Panc1 (cell line): ENCODE measurements at regions of chr2 and their contacts with region 1.

Region 1: GRCh38 chr2:47174733-47175361 is 19.7 kb upstream of the STPG4 start:
- DNase-seq: no peak
- ATAC-seq: peak; percentile 30
- H3K4me3 ChIP-seq: peak overlapping the region; percentile 69 to 92
- H3K27ac ChIP-seq: peak overlapping the region; percentile 90
- H3K4me1 ChIP-seq: peaks cover 53% of the 10 kb centered on the region
- H3K27me3 ChIP-seq: no peaks in the 10 kb centered on the region
- CTCF ChIP-seq: no peak

Region 2: GRCh38 chr2:47016172-47016913 is 158.5 kb before region 1 on chr2:
- CTCF ChIA-PET with region 1: no interaction called
- POLR2A ChIA-PET with region 1: interaction called, 11 read pairs
- in situ Hi-C with region 1: no loop called
- intact Hi-C with region 1: no loop called
- DNase-seq: peak; percentile 71
- ATAC-seq: peak; percentile 83
- H3K4me3 ChIP-seq: no peak overlapping the region
- H3K27ac ChIP-seq: peak overlapping the region; percentile 73
- H3K4me1 ChIP-seq: peaks cover 15% of the 10 kb centered on the region
- H3K27me3 ChIP-seq: no peaks in the 10 kb centered on the region
- CTCF ChIP-seq: no peak

Region 3: DNA sequence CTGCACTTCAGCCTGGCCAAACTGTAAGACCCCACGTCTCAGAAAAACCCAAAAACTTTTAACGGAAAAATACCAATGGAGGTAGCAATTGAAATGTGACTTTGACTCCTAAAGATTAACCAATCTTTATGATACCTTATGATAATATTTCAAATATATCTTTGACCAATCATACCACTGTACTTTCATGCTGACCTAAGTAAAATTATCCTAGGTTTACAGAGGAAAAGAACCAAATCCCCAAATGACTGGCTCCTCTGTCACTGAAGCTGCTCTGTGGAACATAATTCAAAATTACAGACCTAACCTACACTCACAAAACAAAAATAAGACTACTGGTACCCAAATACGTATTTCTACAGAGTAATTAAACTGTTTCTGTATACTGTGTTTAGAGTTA is 12.1 kb before region 1 on chr2:
- CTCF ChIA-PET with region 1: no interaction called
- POLR2A ChIA-PET with region 1: interaction called, 11 read pairs
- in situ Hi-C with region 1: no loop called
- intact Hi-C with region 1: no loop called
- DNase-seq: no peak
- ATAC-seq: peak; percentile 13; the same call in 1 of the 2 replicates
- H3K4me3 ChIP-seq: no peak overlapping the region
- H3K27ac ChIP-seq: no peak overlapping the region
- H3K4me1 ChIP-seq: peaks cover 16% of the 10 kb centered on the region
- H3K27me3 ChIP-seq: no peaks in the 10 kb centered on the region
- CTCF ChIP-seq: no peak

Region 4: GRCh38 chr2:47272031-47272864 is 97.4 kb after region 1 on chr2:
- CTCF ChIA-PET with region 1: interaction called, 6 read pairs
- POLR2A ChIA-PET with region 1: interaction called, 10 read pairs
- in situ Hi-C with region 1: no loop called
- intact Hi-C with region 1: no loop called
- DNase-seq: no peak
- ATAC-seq: peak; percentile 89
- H3K4me3 ChIP-seq: peak overlapping the region; percentile 50 to 68
- H3K27ac ChIP-seq: peak overlapping the region; percentile 73
- H3K4me1 ChIP-seq: peaks cover 17% of the 10 kb centered on the region
- H3K27me3 ChIP-seq: no peaks in the 10 kb centered on the region
- CTCF ChIP-seq: peak; percentile 99

Region 5: DNA sequence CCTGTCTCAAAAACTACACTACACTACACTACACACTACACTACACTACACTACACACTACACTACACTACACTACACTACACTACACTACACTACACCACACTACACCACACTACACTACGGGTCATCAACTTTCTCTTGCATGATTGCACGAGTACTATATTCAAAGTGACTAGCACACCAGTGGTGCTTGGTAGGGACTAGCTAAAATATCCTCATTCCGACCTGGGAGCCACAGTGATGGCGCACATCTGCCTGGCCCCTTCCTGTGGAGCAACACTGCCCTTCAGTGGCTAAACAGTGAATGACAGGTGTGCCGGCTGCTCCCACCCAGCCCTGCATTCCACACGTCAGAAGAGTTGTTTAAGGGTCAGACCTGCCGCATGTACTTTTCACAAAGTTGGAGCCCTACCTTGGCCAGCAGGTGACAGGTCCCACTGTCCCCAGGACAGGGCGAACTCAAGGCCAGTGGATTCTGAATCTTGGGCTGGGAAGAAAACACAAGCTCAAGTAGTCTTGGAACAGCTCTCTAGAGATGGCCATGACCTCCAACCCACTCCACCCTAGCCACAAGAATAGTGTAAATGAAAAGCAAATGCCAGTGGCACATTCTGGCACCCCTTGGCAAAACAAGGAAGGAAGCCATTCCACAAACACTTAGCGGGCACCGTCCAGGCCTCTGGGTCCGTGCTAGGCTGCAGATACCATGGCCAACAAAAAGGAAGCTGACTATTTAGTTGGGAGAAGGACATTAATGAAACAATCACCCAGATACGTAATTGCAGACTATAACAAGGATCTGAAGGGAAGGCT is 148.4 kb after region 1 on chr2:
- CTCF ChIA-PET with region 1: interaction called, 9 read pairs
- POLR2A ChIA-PET with region 1: interaction called, 5 read pairs
- in situ Hi-C with region 1: no loop called
- intact Hi-C with region 1: loop called (anchors 5 kb)
- DNase-seq: peak; percentile 67
- ATAC-seq: peak; percentile 96
- H3K4me3 ChIP-seq: no peak overlapping the region
- H3K27ac ChIP-seq: no peak overlapping the region
- H3K4me1 ChIP-seq: peaks cover 15% of the 10 kb centered on the region; the same call in 1 of the 2 replicates
- H3K27me3 ChIP-seq: no peaks in the 10 kb centered on the region
- CTCF ChIP-seq: peak; percentile 96